Sigmoid colon (tissue), 7 donors: ENCODE measurements at regions of chr6 and their contacts with region 1.

Region 1: GRCh38 chr6:28335564-28336283 is at the start of gene ZSCAN31:
- DNase-seq: peak; percentile 99
- H3K4me3 ChIP-seq: peak within 1 kb of the TSS; percentile 54 to 73 (median 65)
- H3K27ac ChIP-seq: peak within 1 kb of the TSS; percentile 91 to 99 (median 95)
- H3K4me1 ChIP-seq: peaks cover 4 to 35% (median 19%) of the 10 kb centered on the region in 4 donors
- H3K27me3 ChIP-seq: no peaks in the 10 kb centered on the region
- CTCF ChIP-seq: no peak
- EP300 ChIP-seq: peak in 1 of 4 donors; percentile 31
- POLR2A ChIP-seq: peak; percentile 89 to 91
- total RNA-seq, gene ZSCAN31: 22.8 to 41.7 (median 30.8) TPM

Region 2: GRCh38 chr6:27146706-27147505 is 1188.8 kb before region 1 on chr6:
- intact Hi-C with region 1: loop called (anchors 5 kb)
- DNase-seq: peak; percentile 92
- H3K4me3 ChIP-seq: peak overlapping the region; percentile 50 to 59 (median 56)
- H3K27ac ChIP-seq: peak overlapping the region; percentile 86 to 94 (median 91)
- H3K4me1 ChIP-seq: peaks cover 0 to 26% (median 20%) of the 10 kb centered on the region in 4 donors
- H3K27me3 ChIP-seq: no peaks in the 10 kb centered on the region
- CTCF ChIP-seq: no peak
- EP300 ChIP-seq: peak in 1 of 4 donors; percentile 20
- POLR2A ChIP-seq: peak; percentile 95 to 96

Region 3: DNA sequence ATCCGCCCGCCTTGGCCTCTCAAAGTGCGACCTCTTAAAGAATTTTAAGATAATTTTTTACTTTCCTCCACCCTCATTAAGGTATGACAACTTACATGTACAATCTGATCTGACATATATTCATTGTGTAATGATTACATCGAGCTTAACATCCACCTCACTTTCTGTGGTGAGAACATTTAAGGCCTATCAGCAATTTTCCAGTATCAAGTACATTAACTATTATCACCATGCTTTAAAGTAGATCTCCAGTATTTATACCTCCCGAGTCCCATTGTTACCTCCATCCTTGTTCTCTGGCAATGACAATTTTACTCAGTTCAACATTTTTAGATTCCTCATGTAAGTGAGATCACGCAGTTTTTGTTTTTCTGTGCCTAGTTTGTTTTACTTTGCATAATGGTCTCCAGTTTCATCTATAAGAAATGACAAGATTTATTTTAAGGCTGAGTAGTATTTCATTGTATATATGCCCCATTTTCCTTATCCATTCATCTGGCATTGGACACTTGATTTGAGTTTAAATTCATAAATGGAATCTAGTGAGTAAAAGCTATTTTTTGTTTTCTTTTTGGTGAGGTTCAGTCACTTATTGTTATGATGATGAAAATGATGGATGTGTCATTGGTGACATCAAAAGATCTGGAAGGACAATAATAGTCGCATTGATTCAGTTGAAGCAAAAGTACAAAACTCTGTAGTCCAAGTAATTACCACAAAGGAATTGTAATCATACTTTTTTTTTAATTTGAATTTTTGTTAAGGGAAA is 510.5 kb before region 1 on chr6:
- intact Hi-C with region 1: no loop called
- DNase-seq: no peak
- H3K4me3 ChIP-seq: peak overlapping the region; percentile 39 to 52 (median 42)
- H3K27ac ChIP-seq: peak overlapping the region; percentile 53 to 84 (median 74)
- H3K4me1 ChIP-seq: no peaks in the 10 kb centered on the region
- H3K27me3 ChIP-seq: peaks cover 12 to 54% (median 36%) of the 10 kb centered on the region in 3 donors
- CTCF ChIP-seq: no peak
- EP300 ChIP-seq: no peak
- POLR2A ChIP-seq: no peak

Region 4: GRCh38 chr6:28266962-28267694 is 68.6 kb before region 1 on chr6 and contains the start of gene ZSCAN26:
- intact Hi-C with region 1: loop called (anchors 5 kb)
- DNase-seq: peak; percentile 90
- H3K4me3 ChIP-seq: peak within 1 kb of the TSS; percentile 68 to 80 (median 73)
- H3K27ac ChIP-seq: peak within 1 kb of the TSS; percentile 83 to 91 (median 88)
- H3K4me1 ChIP-seq: peaks cover 0 to 32% (median 22%) of the 10 kb centered on the region in 4 donors
- H3K27me3 ChIP-seq: no peaks in the 10 kb centered on the region
- CTCF ChIP-seq: no peak
- EP300 ChIP-seq: no peak
- POLR2A ChIP-seq: peak; percentile 52 to 55
- total RNA-seq, gene ZSCAN26: 25.5 to 29.4 (median 27.6) TPM

Region 5: GRCh38 chr6:28281288-28282064 is 54.2 kb before region 1 on chr6 and contains the start of gene PGBD1:
- intact Hi-C with region 1: loop called (anchors 5 kb)
- DNase-seq: peak; percentile 86
- H3K4me3 ChIP-seq: peak within 1 kb of the TSS; percentile 65 to 68 (median 66)
- H3K27ac ChIP-seq: peak within 1 kb of the TSS; percentile 77 to 79 (median 78)
- H3K4me1 ChIP-seq: peaks cover 0 to 18% (median 12%) of the 10 kb centered on the region in 4 donors
- H3K27me3 ChIP-seq: no peaks in the 10 kb centered on the region
- CTCF ChIP-seq: no peak
- EP300 ChIP-seq: no peak
- POLR2A ChIP-seq: peak in 1 of 2 donors; percentile 51
- total RNA-seq, gene PGBD1: 5.4 to 11.4 (median 9.2) TPM

Region 6: DNA sequence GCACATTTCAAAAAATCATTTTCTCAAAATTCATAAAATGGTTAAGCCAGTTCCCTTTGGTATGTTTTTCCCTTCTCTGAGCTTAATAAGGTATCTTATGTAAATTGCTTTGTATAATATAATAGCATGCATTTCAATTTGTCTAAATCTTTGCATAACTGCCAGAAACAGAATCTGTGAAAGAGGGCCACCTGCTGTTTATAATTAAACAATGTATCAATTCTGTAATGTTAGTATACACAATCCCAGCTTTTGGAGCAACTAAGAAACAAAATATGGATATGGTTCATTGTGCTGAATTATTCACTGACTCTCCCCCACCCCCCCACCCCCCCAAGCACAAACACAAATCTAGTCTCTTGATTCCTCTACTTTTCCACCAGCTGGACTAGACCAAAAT is 244.8 kb after region 1 on chr6:
- intact Hi-C with region 1: no loop called
- DNase-seq: no peak
- H3K4me3 ChIP-seq: no peak overlapping the region
- H3K27ac ChIP-seq: no peak overlapping the region
- H3K4me1 ChIP-seq: no peaks in the 10 kb centered on the region
- H3K27me3 ChIP-seq: peaks cover 0 to 16% (median under 1%) of the 10 kb centered on the region in 3 donors
- CTCF ChIP-seq: no peak
- EP300 ChIP-seq: no peak
- POLR2A ChIP-seq: no peak